ENCODE measurements at regions of chr1 and their contacts with region 1.

Region 1: GRCh38 chr1:234722904-234723720 is 113.1 kb upstream of the IRF2BP2 start:
- DNase-seq: peak; percentile 82 to 88 (median 82)
- ATAC-seq: peak; percentile 23 to 49
- H3K4me3 ChIP-seq: no peak overlapping the region
- H3K27ac ChIP-seq: peak overlapping the region; percentile 100
- H3K4me1 ChIP-seq: peaks cover 46% of the 10 kb centered on the region
- H3K27me3 ChIP-seq: no peaks in the 10 kb centered on the region

Region 2: DNA sequence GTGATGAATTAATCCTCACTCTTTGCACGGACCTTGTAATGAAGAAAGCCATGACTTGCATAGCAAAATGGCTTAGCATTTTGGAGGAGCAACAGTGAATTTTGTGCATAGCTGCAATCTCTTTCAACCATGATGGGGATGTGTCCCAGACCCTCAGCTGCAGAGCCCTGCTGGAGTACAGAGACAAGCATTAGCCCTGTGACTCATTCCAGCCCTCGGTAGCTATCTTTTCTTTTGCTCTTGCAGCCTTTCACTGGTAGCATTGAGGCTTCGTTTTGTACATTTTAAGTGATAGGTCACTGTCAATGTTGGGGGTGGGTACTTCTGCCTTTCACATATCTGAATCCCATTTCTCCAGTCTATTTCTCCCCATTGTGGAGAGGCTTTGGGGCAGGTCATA is 760.2 kb before region 1 on chr1:
- intact Hi-C with region 1: no loop called
- DNase-seq: no peak
- ATAC-seq: no peak
- H3K4me3 ChIP-seq: no peak overlapping the region
- H3K27ac ChIP-seq: no peak overlapping the region
- H3K4me1 ChIP-seq: no peaks in the 10 kb centered on the region
- H3K27me3 ChIP-seq: no peaks in the 10 kb centered on the region

Region 3: GRCh38 chr1:234386122-234386521 is 337.0 kb before region 1 on chr1:
- intact Hi-C with region 1: no loop called
- DNase-seq: no peak
- ATAC-seq: no peak
- H3K4me3 ChIP-seq: no peak overlapping the region
- H3K27ac ChIP-seq: no peak overlapping the region
- H3K4me1 ChIP-seq: no peaks in the 10 kb centered on the region
- H3K27me3 ChIP-seq: no peaks in the 10 kb centered on the region

Region 4: GRCh38 chr1:234533975-234534876 is 188.9 kb before region 1 on chr1:
- intact Hi-C with region 1: loop called in 1 of 4 experiments (anchors 10 kb)
- DNase-seq: peak; percentile 96 to 98 (median 96)
- ATAC-seq: peak; percentile 28 to 34
- H3K4me3 ChIP-seq: no peak overlapping the region
- H3K27ac ChIP-seq: peak overlapping the region; percentile 100
- H3K4me1 ChIP-seq: peaks cover 50% of the 10 kb centered on the region
- H3K27me3 ChIP-seq: no peaks in the 10 kb centered on the region

Region 5: GRCh38 chr1:234842726-234843641 is 119.9 kb after region 1 on chr1:
- intact Hi-C with region 1: loop called in 1 of 4 experiments (anchors 10 kb)
- DNase-seq: peak; percentile 80 to 90 (median 89)
- ATAC-seq: peak; percentile 83 to 84
- H3K4me3 ChIP-seq: no peak overlapping the region
- H3K27ac ChIP-seq: peak overlapping the region; percentile 48
- H3K4me1 ChIP-seq: peaks cover 6% of the 10 kb centered on the region
- H3K27me3 ChIP-seq: no peaks in the 10 kb centered on the region

Region 6: GRCh38 chr1:234918181-234918841 is 195.2 kb after region 1 on chr1:
- intact Hi-C with region 1: loop called in 3 of 4 experiments (anchors 5 to 10 kb)
- DNase-seq: peak; percentile 62 to 80 (median 78)
- ATAC-seq: peak; percentile 63 to 84
- H3K4me3 ChIP-seq: no peak overlapping the region
- H3K27ac ChIP-seq: peak overlapping the region; percentile 84
- H3K4me1 ChIP-seq: peaks cover 27% of the 10 kb centered on the region
- H3K27me3 ChIP-seq: no peaks in the 10 kb centered on the region

Region 7: GRCh38 chr1:234997201-234997895 is 274.2 kb after region 1 on chr1:
- intact Hi-C with region 1: loop called in 1 of 4 experiments (anchors 2 kb)
- DNase-seq: peak; percentile 99
- ATAC-seq: peak; percentile 95 to 96
- H3K4me3 ChIP-seq: no peak overlapping the region
- H3K27ac ChIP-seq: peak overlapping the region; percentile 99
- H3K4me1 ChIP-seq: peaks cover 9% of the 10 kb centered on the region
- H3K27me3 ChIP-seq: no peaks in the 10 kb centered on the region